Activated T-helper 2 cell treated with anti-CD3 and anti-CD28 coated beads, Interferon-gamma antibody, Interleukin-2, Interleukin-4, amounts not matched to agents 10 μg/mL and 5 μg/mL and 100 μg/mL, durations not matched to agents 14 hours and 24 hours and 36 hours (primary cell): ENCODE measurements at regions of chr20 and their contacts with region 1.

Region 1: DNA sequence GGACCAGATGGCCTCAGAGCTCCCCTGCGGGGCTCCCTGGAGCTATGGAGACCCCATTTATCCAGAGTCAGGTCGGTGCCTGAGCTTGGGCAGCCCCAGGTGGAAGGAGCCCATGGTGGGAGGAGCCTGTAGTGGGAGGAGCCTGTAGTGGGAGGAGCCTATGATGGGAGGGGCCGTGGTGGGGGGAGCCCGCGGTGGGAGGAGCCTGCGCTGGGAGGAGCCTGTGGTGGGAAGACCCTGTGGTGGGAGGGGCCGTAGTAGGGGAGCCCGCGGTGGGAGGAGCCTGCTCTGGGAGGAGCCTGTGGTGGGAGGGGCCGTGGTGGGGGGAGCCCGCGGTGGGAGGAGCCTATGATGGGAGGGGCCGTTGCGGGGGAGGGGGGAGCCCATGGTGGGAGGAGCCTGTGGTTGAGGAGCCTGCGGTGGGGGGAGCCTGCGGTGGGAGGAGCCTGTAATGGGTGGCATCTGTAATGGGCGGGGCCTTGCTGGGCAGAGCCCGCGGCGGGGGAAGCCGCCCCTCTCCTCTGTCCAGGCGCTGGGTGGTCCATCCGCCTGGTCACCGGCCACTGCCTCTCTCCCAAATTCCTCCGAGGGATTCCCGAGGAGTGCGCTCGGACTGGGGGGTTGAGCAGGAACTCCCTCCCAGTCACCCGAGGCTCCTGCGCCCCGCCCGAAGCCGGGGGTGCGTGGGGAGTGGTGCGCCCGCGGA is 579 bp upstream of the FNDC11 start:
- DNase-seq: peak; percentile 84
- H3K4me3 Mint-ChIP-seq: peak overlapping the region; percentile 42
- H3K27ac Mint-ChIP-seq: no peak overlapping the region
- H3K4me1 Mint-ChIP-seq: peaks cover 8% of the 10 kb centered on the region
- H3K27me3 Mint-ChIP-seq: peaks cover 15% of the 10 kb centered on the region

Region 2: GRCh38 chr20:62861726-62862336 is 691.5 kb before region 1 on chr20 and contains the start of gene TCFL5:
- intact Hi-C with region 1: loop called (anchors 5 kb)
- DNase-seq: peak; percentile 92
- H3K4me3 Mint-ChIP-seq: peak within 1 kb of the TSS; percentile 51
- H3K27ac Mint-ChIP-seq: no peak within 1 kb of the TSS
- H3K4me1 Mint-ChIP-seq: peaks cover 9% of the 10 kb centered on the region
- H3K27me3 Mint-ChIP-seq: peaks cover 22% of the 10 kb centered on the region
- total RNA-seq, gene TCFL5: 5.7 and 7.1 TPM in 2 replicates

Region 3: DNA sequence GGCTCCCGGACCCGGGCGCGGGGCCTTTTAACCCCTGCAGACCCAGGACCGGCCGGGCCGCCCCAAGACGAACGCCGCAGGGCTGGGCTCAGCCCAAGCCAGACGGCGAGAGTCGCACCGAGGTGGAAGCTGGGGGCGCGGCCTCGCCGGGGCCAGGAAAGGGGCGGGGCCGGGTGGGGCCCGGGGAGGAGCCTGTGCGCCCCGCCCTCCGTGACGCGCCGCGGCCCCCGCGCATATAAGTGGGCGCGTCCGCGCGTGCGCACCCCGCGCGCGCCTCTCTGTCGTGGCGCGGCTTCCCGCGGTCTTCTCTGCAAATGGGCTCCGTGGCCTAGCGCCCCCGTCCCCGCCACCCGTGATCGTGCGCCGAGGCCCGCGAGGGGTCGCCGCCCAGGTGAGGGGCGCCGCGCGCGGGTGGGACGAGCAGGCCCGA is 32.9 kb before region 1 on chr20 and contains the start of gene PPDPF:
- intact Hi-C with region 1: loop called (anchors 2 kb)
- DNase-seq: peak; percentile 79
- H3K4me3 Mint-ChIP-seq: peak within 1 kb of the TSS; percentile 80
- H3K27ac Mint-ChIP-seq: peak within 1 kb of the TSS; percentile 69
- H3K4me1 Mint-ChIP-seq: peaks cover 6% of the 10 kb centered on the region
- H3K27me3 Mint-ChIP-seq: peaks cover 7% of the 10 kb centered on the region
- total RNA-seq, gene PPDPF: 135 and 143 TPM in 2 replicates

Region 4: GRCh38 chr20:63567386-63568169 is 14.2 kb after region 1 on chr20:
- intact Hi-C with region 1: loop called (anchors 2 kb)
- DNase-seq: peak; percentile 56
- H3K4me3 Mint-ChIP-seq: peak overlapping the region; percentile 52
- H3K27ac Mint-ChIP-seq: peak overlapping the region; percentile 17
- H3K4me1 Mint-ChIP-seq: peaks cover 12% of the 10 kb centered on the region
- H3K27me3 Mint-ChIP-seq: peaks cover 3% of the 10 kb centered on the region

Region 5: GRCh38 chr20:63594043-63594561 is 40.7 kb after region 1 on chr20:
- intact Hi-C with region 1: no loop called
- DNase-seq: no peak
- H3K4me3 Mint-ChIP-seq: no peak overlapping the region
- H3K27ac Mint-ChIP-seq: no peak overlapping the region
- H3K4me1 Mint-ChIP-seq: no peaks in the 10 kb centered on the region
- H3K27me3 Mint-ChIP-seq: no peaks in the 10 kb centered on the region

Region 6: DNA sequence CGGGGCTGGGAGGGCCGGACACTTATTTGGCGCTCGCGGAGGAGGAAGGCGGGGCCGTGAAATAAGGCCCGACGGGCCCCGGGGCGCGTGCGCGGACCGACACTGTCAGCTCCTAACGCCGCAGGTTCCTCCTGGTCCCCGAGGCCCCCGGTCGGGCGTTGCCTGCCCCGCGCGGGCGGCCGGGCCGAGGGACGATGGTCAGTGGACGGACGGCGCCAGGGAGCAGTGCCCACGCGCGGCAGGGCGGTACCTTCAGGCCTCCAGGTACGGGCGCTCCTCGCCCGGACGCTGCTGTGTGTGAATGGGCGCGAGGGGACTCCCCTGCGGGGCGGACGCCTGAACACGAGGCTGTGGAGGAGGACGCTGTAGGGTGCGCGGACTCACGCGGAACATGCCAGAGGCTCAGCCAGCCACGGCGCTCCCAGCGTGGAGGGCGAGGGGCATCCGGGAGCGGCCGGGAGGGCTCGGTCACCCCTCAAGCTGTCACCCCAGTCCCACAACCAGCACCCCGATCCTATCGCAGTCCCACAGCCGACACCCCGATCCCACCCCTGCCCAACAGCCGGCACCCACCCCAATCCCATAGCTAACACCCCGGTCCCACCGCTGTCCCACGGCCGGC is 73.9 kb after region 1 on chr20:
- intact Hi-C with region 1: loop called (anchors 1 kb)
- DNase-seq: peak; percentile 94
- H3K4me3 Mint-ChIP-seq: peak overlapping the region; percentile 99
- H3K27ac Mint-ChIP-seq: peak overlapping the region; percentile 96
- H3K4me1 Mint-ChIP-seq: peaks cover 21% of the 10 kb centered on the region
- H3K27me3 Mint-ChIP-seq: no peaks in the 10 kb centered on the region

Region 7: DNA sequence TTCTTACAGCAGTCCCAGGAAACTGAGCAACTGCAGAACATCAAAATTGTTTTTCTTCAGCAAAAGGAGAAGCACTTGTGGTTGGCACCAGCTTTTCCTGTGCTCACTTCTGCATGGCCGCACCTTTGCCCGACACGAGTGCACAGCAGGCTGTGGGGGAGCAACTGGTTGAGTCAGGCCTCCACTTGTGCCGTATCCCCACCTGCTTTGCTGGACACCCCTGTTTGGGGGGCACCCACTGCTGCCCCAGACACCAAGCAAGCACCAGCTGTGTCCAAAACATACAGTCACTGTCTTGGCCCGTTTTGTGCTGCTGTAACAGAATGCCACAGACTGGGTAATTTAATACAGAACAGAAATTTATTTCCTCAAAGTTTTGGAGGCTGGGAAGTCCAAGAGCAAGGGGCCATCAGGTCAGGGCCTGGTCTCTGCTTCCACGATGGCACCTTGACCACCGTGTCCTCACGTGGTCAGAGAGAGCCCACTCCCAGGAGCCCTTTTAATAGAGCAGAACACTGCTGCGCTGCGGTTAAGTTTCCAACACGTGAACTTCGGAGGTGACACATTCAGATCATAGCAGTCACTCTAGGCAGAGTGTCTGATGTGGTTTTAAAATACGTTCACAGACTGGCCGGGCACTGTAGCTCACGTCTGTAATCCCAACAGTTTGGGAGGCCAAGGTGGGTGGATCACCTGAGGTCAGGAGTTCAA is 82.2 kb after region 1 on chr20:
- intact Hi-C with region 1: loop called (anchors 2 kb)
- DNase-seq: peak; percentile 76
- H3K4me3 Mint-ChIP-seq: peak overlapping the region; percentile 45
- H3K27ac Mint-ChIP-seq: peak overlapping the region; percentile 93
- H3K4me1 Mint-ChIP-seq: peaks cover 45% of the 10 kb centered on the region
- H3K27me3 Mint-ChIP-seq: no peaks in the 10 kb centered on the region

Region 8: GRCh38 chr20:63751471-63752271 is 198.3 kb after region 1 on chr20:
- intact Hi-C with region 1: no loop called
- DNase-seq: no peak
- H3K4me3 Mint-ChIP-seq: peak overlapping the region; percentile 30
- H3K27ac Mint-ChIP-seq: peak overlapping the region; percentile 82
- H3K4me1 Mint-ChIP-seq: peaks cover 15% of the 10 kb centered on the region
- H3K27me3 Mint-ChIP-seq: peaks cover 3% of the 10 kb centered on the region